Activated CD8-positive, alpha-beta T cell treated with anti-CD3 and anti-CD28 coated beads for 36 hours (primary cell): ENCODE measurements at regions of chr2 and their contacts with region 1.

Region 1: DNA sequence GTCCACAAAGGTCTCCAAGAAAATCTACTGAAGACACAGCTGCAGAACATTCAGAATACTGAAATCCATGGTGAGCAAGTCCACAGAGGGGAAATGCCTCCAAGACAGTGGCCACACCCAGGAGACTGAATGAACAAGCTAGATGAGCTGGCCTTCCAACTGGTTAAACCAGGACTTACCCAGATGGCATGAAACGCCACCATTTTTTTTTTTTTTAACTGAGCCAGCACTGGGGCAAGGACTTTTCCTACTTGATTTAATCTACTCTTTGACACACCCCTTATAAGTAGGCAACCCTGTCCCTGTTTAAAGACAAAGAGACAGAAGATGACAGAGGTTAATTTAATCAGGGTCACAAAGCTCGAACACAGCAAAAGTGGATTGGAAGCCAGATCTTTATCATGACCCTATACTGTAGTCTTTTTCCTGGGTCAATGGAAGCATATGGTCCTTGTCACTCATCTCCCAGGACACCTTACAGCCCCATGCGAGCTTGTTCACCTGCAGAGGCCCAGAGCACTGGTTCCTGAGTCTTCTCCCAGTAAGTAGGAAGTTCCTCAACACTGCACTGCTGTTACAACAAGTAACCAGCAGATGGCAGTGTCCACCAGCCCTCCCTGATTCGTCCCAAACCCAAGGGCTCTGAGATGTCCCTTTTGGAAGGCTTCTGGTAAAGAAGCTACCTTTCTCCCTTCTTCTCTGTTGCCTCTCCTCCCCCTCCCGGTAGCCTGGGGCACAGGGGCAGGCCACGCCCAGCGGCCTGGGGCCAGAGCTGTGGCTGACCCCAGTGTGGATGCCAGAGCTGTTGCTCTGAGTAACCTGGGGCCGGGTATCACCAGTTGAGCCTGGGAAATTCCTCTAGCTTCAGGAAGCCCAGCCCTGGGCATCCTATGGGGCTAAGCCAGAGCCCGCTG is 5.6 kb upstream of the GDF7 start:
- DNase-seq: peak; percentile 72
- ATAC-seq: peak; percentile 86
- H3K4me3 Mint-ChIP-seq: no peak overlapping the region
- H3K27ac Mint-ChIP-seq: no peak overlapping the region
- H3K4me1 Mint-ChIP-seq: peaks cover 9% of the 10 kb centered on the region
- H3K27me3 Mint-ChIP-seq: peaks cover 49% of the 10 kb centered on the region
- CTCF ChIP-seq: peak; percentile 93

Region 2: DNA sequence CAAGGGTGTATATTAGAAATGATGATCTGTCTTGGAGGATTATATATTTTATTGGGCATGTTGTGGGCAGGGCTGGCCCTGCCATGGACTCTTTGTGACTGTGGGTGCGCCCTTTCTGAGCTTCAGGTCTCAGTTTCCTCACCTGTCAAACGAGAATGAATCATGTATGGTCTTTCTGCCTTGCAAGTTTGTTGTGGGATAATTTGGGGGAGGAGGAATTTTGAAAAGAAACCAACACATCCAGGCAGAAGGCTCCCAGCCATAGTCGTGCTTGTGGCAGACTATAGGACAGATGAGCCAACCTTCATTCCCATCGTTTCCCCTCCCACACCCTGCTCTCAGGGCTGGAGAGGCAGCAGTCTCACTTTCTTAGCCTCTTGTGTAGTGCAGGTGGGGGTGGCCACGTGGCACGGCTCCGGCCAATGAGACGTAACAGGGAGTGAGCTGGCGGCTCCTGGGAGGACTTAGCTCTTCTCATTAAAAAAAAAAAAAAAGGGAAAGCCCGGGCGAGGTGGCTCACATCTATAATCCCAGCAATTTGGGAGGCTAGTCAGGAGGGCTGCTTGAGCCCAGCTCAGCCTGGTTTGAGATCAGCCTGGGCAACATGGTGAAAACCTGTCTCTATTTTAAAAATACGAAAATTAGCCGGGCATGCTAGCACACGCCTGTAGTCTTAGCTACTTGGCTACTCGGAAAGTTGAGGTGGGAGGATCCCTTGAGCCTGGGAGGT is 151.4 kb before region 1 on chr2:
- CTCF ChIA-PET with region 1: no interaction called
- POLR2A ChIA-PET with region 1: no interaction called
- intact Hi-C with region 1: no loop called
- DNase-seq: no peak
- ATAC-seq: no peak
- H3K4me3 Mint-ChIP-seq: no peak overlapping the region
- H3K27ac Mint-ChIP-seq: no peak overlapping the region
- H3K4me1 Mint-ChIP-seq: peaks cover 7% of the 10 kb centered on the region
- H3K27me3 Mint-ChIP-seq: no peaks in the 10 kb centered on the region
- CTCF ChIP-seq: no peak

Region 3: DNA sequence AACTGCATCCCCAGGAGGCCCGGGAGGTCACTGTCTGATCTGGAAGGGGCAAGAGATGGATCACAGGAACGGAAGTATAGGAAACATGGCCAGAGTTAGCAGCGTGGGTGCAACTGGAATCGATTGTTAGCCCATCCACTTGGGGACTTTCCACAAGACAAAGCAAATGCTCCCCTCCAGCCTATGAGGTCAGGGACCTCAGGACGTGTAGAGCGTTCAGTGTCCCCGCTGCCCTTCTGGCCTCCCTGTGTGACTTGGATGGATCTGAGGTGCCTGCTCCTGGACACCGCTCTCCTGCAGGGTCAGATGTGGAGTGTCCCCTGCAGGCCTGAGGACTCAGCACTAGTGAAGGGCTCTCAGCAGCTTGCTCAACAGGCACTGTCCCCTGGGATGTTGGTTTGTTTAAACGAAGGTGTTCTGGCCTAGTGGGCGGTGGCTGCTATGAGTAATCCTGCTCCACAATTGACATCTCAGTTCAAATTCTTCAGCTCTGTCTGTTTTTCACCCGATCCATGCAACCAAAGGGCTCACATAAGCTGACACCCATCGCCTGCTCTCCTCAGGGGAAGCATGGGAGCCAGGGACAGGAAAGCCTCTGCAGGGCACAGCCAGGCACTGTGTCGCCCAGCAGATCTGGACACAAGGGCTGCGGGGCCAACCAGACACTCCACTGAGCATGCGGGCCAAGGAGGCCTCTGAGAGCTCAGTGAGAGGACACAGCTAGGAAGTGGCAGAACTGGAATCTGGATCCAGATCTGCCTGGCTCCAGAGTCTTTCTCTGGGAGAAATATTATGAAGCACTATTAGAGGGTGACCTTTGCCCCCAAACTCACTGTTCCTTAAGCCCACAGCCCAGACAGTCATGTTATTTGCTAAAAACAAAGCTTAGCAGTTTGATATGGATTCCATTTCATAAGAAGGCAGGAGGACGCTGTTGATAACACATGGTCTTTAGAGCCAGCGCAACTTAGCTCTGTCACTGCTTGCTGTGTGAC is 136.0 kb before region 1 on chr2:
- CTCF ChIA-PET with region 1: no interaction called
- POLR2A ChIA-PET with region 1: no interaction called
- intact Hi-C with region 1: no loop called
- DNase-seq: peak; percentile 12
- ATAC-seq: no peak
- H3K4me3 Mint-ChIP-seq: no peak overlapping the region
- H3K27ac Mint-ChIP-seq: no peak overlapping the region
- H3K4me1 Mint-ChIP-seq: no peaks in the 10 kb centered on the region
- H3K27me3 Mint-ChIP-seq: peaks cover 5% of the 10 kb centered on the region
- CTCF ChIP-seq: no peak

Region 4: DNA sequence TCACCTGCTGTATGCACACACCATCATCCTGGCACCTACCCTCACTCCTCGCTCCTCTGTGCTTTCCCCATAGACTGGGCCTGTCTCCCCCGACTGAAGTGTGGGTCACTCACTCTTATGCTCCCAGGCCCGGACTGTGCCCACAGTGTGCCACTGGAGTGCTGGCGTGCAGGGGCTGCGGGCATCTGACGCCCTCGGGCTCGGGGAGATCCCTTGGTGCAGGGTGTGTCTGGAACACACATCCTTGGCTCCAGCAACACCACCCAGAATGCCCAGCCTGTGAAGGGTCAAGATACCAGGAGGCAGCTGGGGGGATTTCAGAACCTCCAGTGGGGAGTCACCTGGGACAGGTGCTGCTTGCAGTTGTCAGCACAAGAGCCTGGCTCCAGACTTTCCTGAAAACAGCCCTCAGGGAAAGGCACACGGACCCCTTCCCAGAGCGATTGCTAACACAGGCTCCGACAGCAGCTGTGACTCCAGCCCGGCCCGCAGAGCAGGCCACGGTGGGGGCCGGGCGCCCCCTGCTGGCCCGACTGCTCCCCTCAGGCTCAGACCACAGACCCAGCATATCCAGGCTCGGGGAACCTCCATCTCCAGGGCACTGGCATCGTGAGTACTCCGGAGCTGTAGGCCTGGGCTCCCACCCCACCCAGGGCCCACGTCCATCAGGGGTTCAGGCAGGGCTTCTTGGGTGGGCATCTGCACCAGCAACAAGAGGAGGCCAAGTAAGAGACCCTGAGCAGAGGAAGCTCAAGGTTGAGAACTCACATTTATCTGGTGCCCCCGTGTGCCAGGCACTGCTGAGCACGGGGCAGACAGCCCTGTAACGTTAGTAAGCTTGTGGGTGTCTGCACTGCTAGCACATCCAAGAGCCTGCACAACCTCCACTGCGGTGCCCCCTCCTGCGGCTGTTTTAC is 19.0 kb before region 1 on chr2:
- CTCF ChIA-PET with region 1: interaction called, 28 read pairs
- POLR2A ChIA-PET with region 1: interaction called, 3 read pairs
- intact Hi-C with region 1: no loop called
- DNase-seq: peak; percentile 80
- ATAC-seq: peak; percentile 99
- H3K4me3 Mint-ChIP-seq: no peak overlapping the region
- H3K27ac Mint-ChIP-seq: no peak overlapping the region
- H3K4me1 Mint-ChIP-seq: no peaks in the 10 kb centered on the region
- H3K27me3 Mint-ChIP-seq: no peaks in the 10 kb centered on the region
- CTCF ChIP-seq: peak; percentile 90

Region 5: DNA sequence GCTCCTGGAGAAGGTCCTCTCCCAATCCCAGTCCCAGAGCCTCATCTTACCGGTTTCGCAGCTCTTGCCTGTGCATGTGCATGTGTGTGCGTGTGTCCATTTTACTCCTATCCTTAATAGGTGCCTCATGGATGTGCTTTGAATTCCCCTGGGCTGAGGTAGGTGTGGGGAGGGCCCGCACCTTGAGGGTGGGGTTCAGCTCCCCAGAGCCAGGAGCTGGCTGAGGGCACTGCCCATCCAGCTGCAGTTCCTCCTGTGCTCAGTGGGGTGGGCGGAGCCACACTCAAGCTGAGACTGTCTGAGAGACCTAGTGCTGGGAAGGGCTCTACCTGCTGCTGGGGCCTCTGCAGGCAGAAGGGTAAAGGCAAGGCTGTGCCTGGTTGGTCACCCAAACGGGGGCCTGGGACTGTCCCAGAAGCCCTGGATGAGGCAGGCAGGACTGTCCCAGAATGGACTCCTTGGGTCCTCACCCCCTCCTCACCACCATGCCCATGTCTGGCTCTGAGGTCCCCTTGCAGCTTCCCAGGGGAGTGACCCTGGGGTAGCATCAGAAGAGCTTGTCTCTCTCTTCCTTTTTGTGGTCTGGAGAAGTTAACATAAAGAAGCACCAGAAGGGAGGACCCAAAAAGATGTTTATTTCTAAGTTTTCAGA is 14.5 kb after region 1 on chr2:
- CTCF ChIA-PET with region 1: interaction called, 83 read pairs
- POLR2A ChIA-PET with region 1: interaction called, 3 read pairs
- intact Hi-C with region 1: no loop called
- DNase-seq: peak; percentile 27
- ATAC-seq: peak; percentile 61
- H3K4me3 Mint-ChIP-seq: no peak overlapping the region
- H3K27ac Mint-ChIP-seq: no peak overlapping the region
- H3K4me1 Mint-ChIP-seq: no peaks in the 10 kb centered on the region
- H3K27me3 Mint-ChIP-seq: peaks cover 18% of the 10 kb centered on the region
- CTCF ChIP-seq: no peak

Region 6: GRCh38 chr2:20781656-20782265 is 120.4 kb after region 1 on chr2:
- CTCF ChIA-PET with region 1: interaction called, 15 read pairs
- POLR2A ChIA-PET with region 1: no interaction called
- intact Hi-C with region 1: no loop called
- DNase-seq: peak; percentile 7
- ATAC-seq: no peak
- H3K4me3 Mint-ChIP-seq: no peak overlapping the region
- H3K27ac Mint-ChIP-seq: no peak overlapping the region
- H3K4me1 Mint-ChIP-seq: no peaks in the 10 kb centered on the region
- H3K27me3 Mint-ChIP-seq: no peaks in the 10 kb centered on the region
- CTCF ChIP-seq: peak; percentile 32

Region 7: GRCh38 chr2:20962939-20963557 is 301.7 kb after region 1 on chr2:
- CTCF ChIA-PET with region 1: interaction called, 186 read pairs
- POLR2A ChIA-PET with region 1: no interaction called
- intact Hi-C with region 1: loop called (anchors 1 kb)
- DNase-seq: peak; percentile 81
- ATAC-seq: peak; percentile 47
- H3K4me3 Mint-ChIP-seq: no peak overlapping the region
- H3K27ac Mint-ChIP-seq: no peak overlapping the region
- H3K4me1 Mint-ChIP-seq: no peaks in the 10 kb centered on the region
- H3K27me3 Mint-ChIP-seq: peaks cover 8% of the 10 kb centered on the region
- CTCF ChIP-seq: peak; percentile 77